ENCODE measurements at regions of chr15 and their contacts with region 1.

Region 1: GRCh38 chr15:22838292-22839042 is at the start of gene NIPA2:
- DNase-seq: peak; percentile 99
- H3K4me3 ChIP-seq: peak within 1 kb of the TSS; percentile 80
- H3K27ac ChIP-seq: peak within 1 kb of the TSS; percentile 96
- H3K4me1 ChIP-seq: peaks cover 10% of the 10 kb centered on the region
- H3K27me3 ChIP-seq: no peaks in the 10 kb centered on the region
- CTCF ChIP-seq: no peak
- total RNA-seq, gene NIPA2: 78.8 and 87.2 TPM in 2 replicates

Region 2: DNA sequence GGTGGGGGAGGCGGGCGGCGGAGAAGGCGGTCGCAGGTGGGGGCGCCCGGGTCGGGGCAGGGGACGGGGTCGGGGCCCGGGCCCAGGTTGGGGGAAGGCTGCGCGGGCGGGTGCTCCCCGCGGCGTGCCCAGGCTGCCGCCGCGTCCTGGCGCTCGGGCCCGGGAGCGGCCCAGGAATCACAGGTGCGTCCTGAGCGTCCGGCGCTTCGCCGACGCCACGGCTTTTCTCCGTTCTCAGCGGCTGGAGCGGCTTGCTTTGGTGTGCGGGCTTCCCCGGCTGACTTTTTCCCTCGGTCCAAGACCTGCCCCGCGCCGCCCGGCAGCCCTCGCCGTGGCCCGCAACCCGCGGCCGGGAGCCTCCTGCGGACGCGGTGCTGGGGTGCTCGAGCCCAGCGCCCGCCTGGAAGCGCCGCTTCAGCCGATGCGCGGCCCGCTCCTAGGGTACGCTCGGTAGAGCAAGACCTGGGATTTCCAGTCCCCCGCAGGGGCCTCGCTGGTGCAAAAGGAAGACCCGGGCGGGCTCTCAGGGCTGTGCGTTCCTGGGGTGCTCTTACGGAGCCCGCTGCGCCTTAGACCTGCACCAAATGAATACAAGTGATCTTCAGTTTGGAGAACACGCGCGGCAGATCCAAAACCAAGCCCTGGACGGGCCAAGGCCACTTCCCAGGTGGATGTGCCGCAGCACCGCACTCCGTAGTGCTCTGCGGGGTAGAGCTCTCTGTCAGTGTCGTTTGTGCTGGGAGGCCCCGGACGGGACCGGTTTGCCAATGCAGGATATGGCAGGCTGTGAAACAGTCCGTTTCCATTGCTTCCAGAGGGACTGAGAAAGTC is 51.4 kb before region 1 on chr15:
- CTCF ChIA-PET with region 1: no interaction called
- POLR2A ChIA-PET with region 1: no interaction called
- intact Hi-C with region 1: loop called (anchors 1 kb)
- DNase-seq: peak; percentile 39
- H3K4me3 ChIP-seq: peak overlapping the region; percentile 73
- H3K27ac ChIP-seq: peak overlapping the region; percentile 53
- H3K4me1 ChIP-seq: peaks cover 4% of the 10 kb centered on the region
- H3K27me3 ChIP-seq: no peaks in the 10 kb centered on the region
- CTCF ChIP-seq: no peak

Region 3: GRCh38 chr15:22808240-22808639 is 30.2 kb before region 1 on chr15:
- CTCF ChIA-PET with region 1: no interaction called
- POLR2A ChIA-PET with region 1: interaction called, 16 read pairs
- intact Hi-C with region 1: no loop called
- DNase-seq: no peak
- H3K4me3 ChIP-seq: no peak overlapping the region
- H3K27ac ChIP-seq: no peak overlapping the region
- H3K4me1 ChIP-seq: no peaks in the 10 kb centered on the region
- H3K27me3 ChIP-seq: no peaks in the 10 kb centered on the region
- CTCF ChIP-seq: no peak

Region 4: GRCh38 chr15:22850055-22850454 is 11.6 kb after region 1 on chr15:
- CTCF ChIA-PET with region 1: no interaction called
- POLR2A ChIA-PET with region 1: no interaction called
- intact Hi-C with region 1: no loop called
- DNase-seq: no peak
- H3K4me3 ChIP-seq: no peak overlapping the region
- H3K27ac ChIP-seq: no peak overlapping the region
- H3K4me1 ChIP-seq: no peaks in the 10 kb centered on the region
- H3K27me3 ChIP-seq: no peaks in the 10 kb centered on the region
- CTCF ChIP-seq: no peak

Region 5: GRCh38 chr15:22872936-22873701 is 34.7 kb after region 1 on chr15:
- CTCF ChIA-PET with region 1: no interaction called
- POLR2A ChIA-PET with region 1: no interaction called
- intact Hi-C with region 1: loop called (anchors 5 kb)
- DNase-seq: peak; percentile 85
- H3K4me3 ChIP-seq: no peak overlapping the region
- H3K27ac ChIP-seq: peak overlapping the region; percentile 56
- H3K4me1 ChIP-seq: peaks cover 3% of the 10 kb centered on the region
- H3K27me3 ChIP-seq: no peaks in the 10 kb centered on the region
- CTCF ChIP-seq: no peak

Region 6: GRCh38 chr15:23095796-23096195 is 257.3 kb after region 1 on chr15:
- CTCF ChIA-PET with region 1: no interaction called
- POLR2A ChIA-PET with region 1: no interaction called
- intact Hi-C with region 1: no loop called
- DNase-seq: no peak
- H3K4me3 ChIP-seq: no peak overlapping the region
- H3K27ac ChIP-seq: no peak overlapping the region
- H3K4me1 ChIP-seq: no peaks in the 10 kb centered on the region
- H3K27me3 ChIP-seq: no peaks in the 10 kb centered on the region
- CTCF ChIP-seq: no peak

Measured in A673 (cell line).